CD8-positive, alpha-beta T cell (primary cell): ENCODE measurements at regions of chr1 and their contacts with region 1.

Region 1: GRCh38 chr1:206865013-206865671 is at the start of gene IL20:
- DNase-seq: peak; percentile 72 to 93 (median 86)
- ATAC-seq: peak; percentile 97
- H3K4me3 ChIP-seq: no peak within 1 kb of the TSS
- H3K4me3 Mint-ChIP-seq: no peak within 1 kb of the TSS
- H3K27ac ChIP-seq: no peak within 1 kb of the TSS
- H3K27ac Mint-ChIP-seq: no peak within 1 kb of the TSS
- H3K4me1 ChIP-seq: peaks cover 7% of the 10 kb centered on the region
- H3K4me1 Mint-ChIP-seq: peaks cover 7% of the 10 kb centered on the region
- H3K27me3 ChIP-seq: no peaks in the 10 kb centered on the region
- H3K27me3 Mint-ChIP-seq: no peaks in the 10 kb centered on the region
- CTCF ChIP-seq: peak; percentile 91
- total RNA-seq, gene IL20: not detected

Region 2: GRCh38 chr1:206833106-206833680 is 31.9 kb before region 1 on chr1:
- CTCF ChIA-PET with region 1: interaction called, 11 read pairs
- POLR2A ChIA-PET with region 1: no interaction called
- intact Hi-C with region 1: no loop called
- DNase-seq: no peak
- ATAC-seq: no peak
- H3K4me3 ChIP-seq: no peak overlapping the region
- H3K4me3 Mint-ChIP-seq: no peak overlapping the region
- H3K27ac ChIP-seq: no peak overlapping the region
- H3K27ac Mint-ChIP-seq: no peak overlapping the region
- H3K4me1 ChIP-seq: peaks cover 25% of the 10 kb centered on the region
- H3K4me1 Mint-ChIP-seq: peaks cover 47% of the 10 kb centered on the region
- H3K27me3 ChIP-seq: no peaks in the 10 kb centered on the region
- H3K27me3 Mint-ChIP-seq: no peaks in the 10 kb centered on the region
- CTCF ChIP-seq: no peak

Region 3: GRCh38 chr1:206885341-206886060 is 20.4 kb after region 1 on chr1:
- CTCF ChIA-PET with region 1: interaction called, 18 read pairs
- POLR2A ChIA-PET with region 1: interaction called, 3 read pairs
- intact Hi-C with region 1: loop called in 1 of 2 experiments (anchors 2 kb)
- DNase-seq: no peak
- ATAC-seq: no peak
- H3K4me3 ChIP-seq: no peak overlapping the region
- H3K4me3 Mint-ChIP-seq: no peak overlapping the region
- H3K27ac ChIP-seq: no peak overlapping the region
- H3K27ac Mint-ChIP-seq: no peak overlapping the region
- H3K4me1 ChIP-seq: peaks cover 4% of the 10 kb centered on the region
- H3K4me1 Mint-ChIP-seq: peaks cover 14% of the 10 kb centered on the region
- H3K27me3 ChIP-seq: no peaks in the 10 kb centered on the region
- H3K27me3 Mint-ChIP-seq: no peaks in the 10 kb centered on the region
- CTCF ChIP-seq: no peak

Region 4: GRCh38 chr1:206895830-206896242 is 30.7 kb after region 1 on chr1:
- CTCF ChIA-PET with region 1: interaction called, 15 read pairs
- POLR2A ChIA-PET with region 1: interaction called, 9 read pairs
- intact Hi-C with region 1: loop called in 1 of 2 experiments (anchors 2 kb)
- DNase-seq: no peak
- ATAC-seq: no peak
- H3K4me3 ChIP-seq: no peak overlapping the region
- H3K4me3 Mint-ChIP-seq: no peak overlapping the region
- H3K27ac ChIP-seq: no peak overlapping the region
- H3K27ac Mint-ChIP-seq: no peak overlapping the region
- H3K4me1 ChIP-seq: peaks cover 18% of the 10 kb centered on the region
- H3K4me1 Mint-ChIP-seq: peaks cover 42% of the 10 kb centered on the region
- H3K27me3 ChIP-seq: no peaks in the 10 kb centered on the region
- H3K27me3 Mint-ChIP-seq: no peaks in the 10 kb centered on the region
- CTCF ChIP-seq: no peak

Region 5: DNA sequence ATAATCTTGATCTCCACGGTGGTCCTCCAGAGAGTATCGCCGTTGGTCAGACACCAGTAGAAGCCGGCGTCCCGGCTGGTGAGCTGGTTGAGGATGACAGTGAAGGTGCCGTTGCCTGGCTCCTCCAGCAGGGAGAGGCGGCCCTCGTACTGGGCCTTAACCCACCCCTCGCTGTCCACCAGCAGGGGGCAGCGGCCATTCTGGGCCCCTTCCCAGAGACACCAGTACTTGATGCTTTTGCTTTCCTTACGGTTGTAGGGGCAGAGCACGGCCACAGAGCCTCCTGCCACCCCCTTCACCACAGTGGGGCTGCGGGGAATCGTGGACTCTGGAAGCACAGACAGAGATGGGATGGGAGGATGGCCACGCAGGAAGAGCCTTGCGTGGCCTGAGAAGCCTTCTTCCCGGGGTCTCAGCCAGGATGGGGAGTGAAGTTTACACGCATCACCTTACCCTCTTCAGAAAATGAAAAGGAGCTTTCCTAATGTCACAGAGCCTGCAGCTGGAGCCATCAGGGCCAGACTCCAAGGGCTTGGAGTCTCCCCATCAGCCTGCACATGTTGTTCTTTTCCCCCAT is 70.4 kb after region 1 on chr1:
- CTCF ChIA-PET with region 1: interaction called, 84 read pairs
- POLR2A ChIA-PET with region 1: no interaction called
- intact Hi-C with region 1: loop called (anchors 1 kb)
- DNase-seq: peak in 6 of 9 experiments; percentile 41 to 65 (median 52)
- ATAC-seq: peak; percentile 45
- H3K4me3 ChIP-seq: no peak overlapping the region
- H3K4me3 Mint-ChIP-seq: no peak overlapping the region
- H3K27ac ChIP-seq: no peak overlapping the region
- H3K27ac Mint-ChIP-seq: no peak overlapping the region
- H3K4me1 ChIP-seq: peaks cover 20% of the 10 kb centered on the region
- H3K4me1 Mint-ChIP-seq: peaks cover 26% of the 10 kb centered on the region
- H3K27me3 ChIP-seq: no peaks in the 10 kb centered on the region
- H3K27me3 Mint-ChIP-seq: no peaks in the 10 kb centered on the region
- CTCF ChIP-seq: peak; percentile 48